ENCODE measurements at regions of chr6 and their contacts with region 1.

Region 1: GRCh38 chr6:34126419-34126818 is 19.5 kb downstream of the GRM4 start:
- DNase-seq: no peak
- ATAC-seq: no peak
- H3K4me3 Mint-ChIP-seq: no peak overlapping the region
- H3K27ac Mint-ChIP-seq: no peak overlapping the region
- H3K4me1 Mint-ChIP-seq: peaks cover 56% of the 10 kb centered on the region
- H3K27me3 Mint-ChIP-seq: no peaks in the 10 kb centered on the region
- CTCF ChIP-seq: no peak

Region 2: DNA sequence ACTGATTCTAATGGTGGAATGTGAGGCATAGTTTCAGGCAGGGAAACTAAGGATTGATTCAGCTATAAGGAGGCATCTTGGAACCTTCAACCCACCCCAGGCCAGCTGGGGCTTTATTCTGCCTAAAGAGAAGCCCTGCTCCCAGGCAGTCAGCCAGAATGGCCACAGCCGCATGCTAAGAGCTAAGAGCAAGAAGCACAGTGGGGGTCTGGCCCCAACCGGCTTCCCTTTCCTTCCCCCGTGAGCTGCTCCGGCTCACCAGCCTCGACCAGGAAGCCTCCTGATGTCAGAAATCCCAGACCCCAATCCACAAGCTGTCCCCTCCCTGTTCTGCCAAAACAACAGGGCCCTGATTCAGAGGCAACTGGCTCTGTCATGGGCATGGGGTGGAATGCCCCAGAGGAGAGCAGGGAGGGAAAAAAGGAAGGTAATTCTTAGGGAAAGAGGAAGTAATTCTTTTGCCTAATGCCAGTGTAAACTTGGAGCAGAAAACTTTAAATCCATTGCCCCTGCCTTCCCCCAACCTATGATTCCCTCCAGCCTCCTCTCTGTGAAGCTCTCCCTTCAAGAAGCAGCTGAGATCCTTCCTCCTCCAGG is 12.6 kb after region 1 on chr6:
- CTCF ChIA-PET with region 1: interaction called, 34 read pairs
- POLR2A ChIA-PET with region 1: interaction called, 19 read pairs
- DNase-seq: no peak
- ATAC-seq: peak; percentile 25
- H3K4me3 Mint-ChIP-seq: no peak overlapping the region
- H3K27ac Mint-ChIP-seq: peak overlapping the region; percentile 56
- H3K4me1 Mint-ChIP-seq: peaks cover 94% of the 10 kb centered on the region
- H3K27me3 Mint-ChIP-seq: peaks cover 11% of the 10 kb centered on the region
- CTCF ChIP-seq: no peak

Measured in WTC11 (cell line).